Endothelial cell of umbilical vein (primary cell): ENCODE measurements at regions of chr5 and their contacts with region 1.

Region 1: GRCh38 chr5:80960531-80961375 is 590 bp downstream of the RASGRF2 start:
- DNase-seq: peak; percentile 25
- H3K4me3 ChIP-seq: peak overlapping the region; percentile 20 to 49 (median 35)
- H3K27ac ChIP-seq: no peak overlapping the region
- H3K4me1 ChIP-seq: peaks cover 35% of the 10 kb centered on the region
- H3K27me3 ChIP-seq: peaks cover 17 to 35% of the 10 kb centered on the region in 2 experiments
- CTCF ChIP-seq: peak in 1 of 2 donors; percentile 1
- POLR2A ChIP-seq: no peak

Region 2: GRCh38 chr5:80153586-80154126 is 807.1 kb before region 1 on chr5:
- CTCF ChIA-PET with region 1: no interaction called
- POLR2A ChIA-PET with region 1: no interaction called
- dilution Hi-C with region 1: no loop called
- intact Hi-C with region 1: no loop called
- DNase-seq: no peak
- H3K4me3 ChIP-seq: no peak overlapping the region
- H3K27ac ChIP-seq: no peak overlapping the region
- H3K4me1 ChIP-seq: no peaks in the 10 kb centered on the region
- H3K27me3 ChIP-seq: no peaks in the 10 kb centered on the region
- CTCF ChIP-seq: no peak
- POLR2A ChIP-seq: no peak

Region 3: GRCh38 chr5:80487829-80488721 is 472.7 kb before region 1 on chr5 and contains the start of gene FAM151B:
- CTCF ChIA-PET with region 1: no interaction called
- POLR2A ChIA-PET with region 1: no interaction called
- dilution Hi-C with region 1: no loop called
- intact Hi-C with region 1: loop called (anchors 10 kb)
- DNase-seq: peak; percentile 93
- H3K4me3 ChIP-seq: peak within 1 kb of the TSS; percentile 55 to 76 (median 76)
- H3K27ac ChIP-seq: peak within 1 kb of the TSS; percentile 15
- H3K4me1 ChIP-seq: no peaks in the 10 kb centered on the region
- H3K27me3 ChIP-seq: no peaks in the 10 kb centered on the region
- CTCF ChIP-seq: peak in 1 of 2 donors; percentile 11
- POLR2A ChIP-seq: peak; percentile 7
- total RNA-seq, gene FAM151B: 2.0 and 2.6 TPM in 2 replicates

Region 4: DNA sequence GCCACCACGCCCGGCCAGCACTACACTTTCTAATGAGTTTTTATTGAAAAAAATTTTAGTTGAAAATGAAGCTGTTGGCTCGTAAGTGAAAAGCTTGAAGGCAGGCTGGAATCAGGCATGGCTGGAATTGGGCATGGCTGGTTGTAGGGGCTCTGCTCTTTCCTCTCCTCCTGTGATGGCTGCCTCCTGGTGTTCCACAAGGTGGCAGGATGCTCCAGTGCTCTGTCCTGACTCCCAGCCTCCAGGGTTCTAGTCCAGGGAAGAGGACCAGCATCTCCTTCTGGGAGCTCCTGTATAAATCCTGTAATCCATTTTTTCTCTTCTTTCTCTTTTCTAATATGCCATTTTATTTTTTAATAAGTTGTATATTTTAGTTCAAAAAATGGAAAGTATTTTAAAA is 248.8 kb before region 1 on chr5:
- CTCF ChIA-PET with region 1: no interaction called
- POLR2A ChIA-PET with region 1: no interaction called
- dilution Hi-C with region 1: no loop called
- intact Hi-C with region 1: loop called (anchors 5 kb)
- DNase-seq: no peak
- H3K4me3 ChIP-seq: no peak overlapping the region
- H3K27ac ChIP-seq: no peak overlapping the region
- H3K4me1 ChIP-seq: peaks cover 6% of the 10 kb centered on the region
- H3K27me3 ChIP-seq: no peaks in the 10 kb centered on the region
- CTCF ChIP-seq: peak in 1 of 2 donors; percentile 57
- POLR2A ChIP-seq: no peak

Region 5: GRCh38 chr5:81068063-81068462 is 107.3 kb after region 1 on chr5:
- CTCF ChIA-PET with region 1: no interaction called
- POLR2A ChIA-PET with region 1: no interaction called
- dilution Hi-C with region 1: no loop called
- intact Hi-C with region 1: loop called (anchors 1 kb)
- DNase-seq: peak; percentile 59
- H3K4me3 ChIP-seq: no peak overlapping the region
- H3K27ac ChIP-seq: peak overlapping the region; percentile 54
- H3K4me1 ChIP-seq: peaks cover 8% of the 10 kb centered on the region
- H3K27me3 ChIP-seq: no peaks in the 10 kb centered on the region
- CTCF ChIP-seq: no peak
- POLR2A ChIP-seq: no peak

Region 6: GRCh38 chr5:81165493-81166119 is 204.9 kb after region 1 on chr5:
- CTCF ChIA-PET with region 1: no interaction called
- POLR2A ChIA-PET with region 1: no interaction called
- dilution Hi-C with region 1: no loop called
- intact Hi-C with region 1: loop called (anchors 2 kb)
- DNase-seq: peak; percentile 51
- H3K4me3 ChIP-seq: no peak overlapping the region
- H3K27ac ChIP-seq: no peak overlapping the region
- H3K4me1 ChIP-seq: no peaks in the 10 kb centered on the region
- H3K27me3 ChIP-seq: no peaks in the 10 kb centered on the region
- CTCF ChIP-seq: peak; percentile 68 to 78
- POLR2A ChIP-seq: no peak